ENCODE measurements at regions of chr1 and their contacts with region 1.

Region 1: DNA sequence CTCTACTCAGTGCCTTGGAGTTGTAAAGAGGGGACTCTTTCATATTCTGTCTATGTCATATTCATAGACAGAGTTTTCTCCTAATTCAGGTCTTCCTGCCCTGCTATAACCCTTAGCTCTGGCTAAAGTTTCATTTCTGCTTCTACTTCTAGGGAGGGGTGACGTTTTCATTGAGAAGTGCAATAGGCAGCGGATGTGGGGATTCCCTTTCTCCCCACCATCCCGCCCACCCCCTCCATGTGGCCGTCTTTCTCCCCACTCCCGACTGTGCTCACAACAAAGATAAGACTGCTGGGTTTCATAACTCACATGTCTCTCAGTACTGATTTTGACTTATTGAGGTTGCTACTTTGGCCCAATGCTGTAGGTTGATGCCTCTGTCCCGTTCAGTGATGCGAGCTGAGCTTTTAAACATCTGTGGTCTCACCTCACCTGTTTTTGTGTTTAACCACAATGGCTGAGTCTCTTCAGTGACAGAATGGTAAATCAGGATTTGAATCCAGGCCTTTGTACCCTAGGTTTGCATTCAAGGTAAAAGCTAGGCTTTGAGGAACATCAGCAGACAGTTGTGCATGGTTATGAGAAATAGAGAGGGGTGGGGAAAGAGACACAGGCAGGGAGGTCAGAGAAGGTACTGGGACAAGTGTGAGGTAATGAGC is 7.8 kb upstream of the KIF14 start:
- DNase-seq: no peak

Region 2: GRCh38 chr1:200279810-200280411 is 348.4 kb before region 1 on chr1:
- intact Hi-C with region 1: no loop called
- DNase-seq: no peak

Region 3: DNA sequence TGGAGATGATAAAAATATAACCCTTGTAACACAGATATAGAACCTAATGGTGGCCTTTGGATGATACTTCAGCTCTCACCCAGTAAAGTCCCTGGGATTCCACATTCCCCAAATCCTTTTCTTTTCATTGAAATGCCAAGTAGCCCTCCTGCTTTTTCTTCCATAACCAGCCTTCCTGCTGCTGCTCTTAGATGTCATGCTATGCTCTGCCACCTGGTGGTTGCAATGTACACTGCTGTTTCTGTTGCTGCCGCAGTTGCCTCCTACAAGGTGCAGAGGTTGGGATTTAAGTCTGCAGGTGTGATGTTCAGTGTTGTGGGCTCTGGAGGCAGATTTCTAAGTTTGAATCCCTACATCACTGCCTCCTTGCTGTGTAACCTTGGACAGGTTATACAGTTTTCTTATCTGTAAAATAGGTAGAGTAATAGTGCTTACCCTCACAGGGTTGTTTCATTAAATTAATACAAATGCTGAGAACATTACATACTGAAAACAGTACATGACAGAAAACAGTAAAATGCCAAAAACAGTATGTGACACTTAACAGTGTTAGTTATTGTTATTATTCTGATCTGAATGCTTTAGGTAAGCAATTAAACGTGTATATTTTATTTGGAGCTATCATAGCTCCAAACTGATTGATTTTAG is 174.6 kb after region 1 on chr1:
- intact Hi-C with region 1: loop called (anchors 5 to 10 kb)
- DNase-seq: peak; percentile 87

Region 4: DNA sequence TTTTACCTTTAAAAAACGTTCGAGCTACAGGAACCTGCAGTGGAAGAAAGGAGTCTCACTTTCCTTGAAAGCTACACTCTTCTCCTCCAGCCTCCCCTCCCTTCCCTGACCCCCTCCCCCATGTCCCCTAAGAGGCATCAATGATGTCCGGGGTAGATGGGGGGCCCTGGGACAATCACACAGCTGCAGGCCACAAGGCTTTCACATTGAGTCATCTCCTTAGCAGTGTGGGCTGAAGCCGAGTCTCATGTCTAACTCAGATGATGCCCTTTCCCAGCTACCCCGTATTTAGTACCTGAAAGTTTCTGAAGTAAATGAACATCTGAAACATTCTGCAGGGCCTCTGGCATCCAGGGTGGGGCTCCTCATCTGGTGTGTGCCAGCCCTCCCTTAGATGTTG is 238.2 kb after region 1 on chr1:
- intact Hi-C with region 1: no loop called
- DNase-seq: no peak